ENCODE measurements at regions of chr16 and their contacts with region 1.

Region 1: DNA sequence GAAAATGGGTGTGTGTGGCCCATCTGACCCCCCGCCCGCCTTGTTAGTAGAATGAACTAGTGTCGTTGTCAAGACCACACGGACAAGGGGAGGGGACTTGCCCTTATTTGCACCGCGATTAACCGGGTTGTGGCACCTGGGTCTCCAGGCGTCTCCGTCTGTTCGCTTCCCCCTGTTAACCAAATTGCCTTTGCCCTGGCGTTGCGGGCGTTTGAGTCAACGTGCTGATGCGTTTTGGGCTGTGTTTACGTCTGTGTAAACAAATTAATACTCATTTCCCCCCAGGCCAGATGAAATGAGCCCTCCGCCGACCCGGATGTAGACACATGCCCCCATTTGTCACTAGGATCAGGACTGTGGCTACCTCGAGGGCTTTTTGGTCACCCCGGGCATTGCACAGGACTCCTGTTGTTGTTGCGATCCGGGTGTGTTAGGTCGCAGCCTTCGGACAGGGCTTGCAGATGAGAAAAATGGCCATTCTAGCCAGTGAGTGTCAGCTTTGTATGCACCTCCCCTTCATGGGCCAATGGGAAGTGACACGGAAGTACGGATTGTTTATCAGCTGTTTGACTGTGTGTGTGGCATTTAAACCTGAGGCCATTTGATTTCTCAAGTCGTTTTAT is 906 bp downstream of the RBL2 start:
- DNase-seq: peak; percentile 57 to 82
- ATAC-seq: peak; percentile 89 to 92 (median 90)
- H3K4me3 ChIP-seq: peak overlapping the region; percentile 82
- H3K27ac ChIP-seq: peak overlapping the region; percentile 92
- H3K4me1 ChIP-seq: peaks cover 20% of the 10 kb centered on the region
- H3K27me3 ChIP-seq: no peaks in the 10 kb centered on the region
- CTCF ChIP-seq: no peak

Region 2: GRCh38 chr16:53235851-53236250 is 199.3 kb before region 1 on chr16:
- intact Hi-C with region 1: no loop called
- DNase-seq: no peak
- ATAC-seq: no peak
- H3K4me3 ChIP-seq: no peak overlapping the region
- H3K27ac ChIP-seq: no peak overlapping the region
- H3K4me1 ChIP-seq: no peaks in the 10 kb centered on the region
- H3K27me3 ChIP-seq: no peaks in the 10 kb centered on the region
- CTCF ChIP-seq: no peak

Region 3: GRCh38 chr16:53495325-53495724 is 60.1 kb after region 1 on chr16:
- intact Hi-C with region 1: loop called (anchors 5 kb)
- DNase-seq: no peak
- ATAC-seq: no peak
- H3K4me3 ChIP-seq: no peak overlapping the region
- H3K27ac ChIP-seq: no peak overlapping the region
- H3K4me1 ChIP-seq: peaks cover 7% of the 10 kb centered on the region
- H3K27me3 ChIP-seq: no peaks in the 10 kb centered on the region
- CTCF ChIP-seq: no peak

Region 4: DNA sequence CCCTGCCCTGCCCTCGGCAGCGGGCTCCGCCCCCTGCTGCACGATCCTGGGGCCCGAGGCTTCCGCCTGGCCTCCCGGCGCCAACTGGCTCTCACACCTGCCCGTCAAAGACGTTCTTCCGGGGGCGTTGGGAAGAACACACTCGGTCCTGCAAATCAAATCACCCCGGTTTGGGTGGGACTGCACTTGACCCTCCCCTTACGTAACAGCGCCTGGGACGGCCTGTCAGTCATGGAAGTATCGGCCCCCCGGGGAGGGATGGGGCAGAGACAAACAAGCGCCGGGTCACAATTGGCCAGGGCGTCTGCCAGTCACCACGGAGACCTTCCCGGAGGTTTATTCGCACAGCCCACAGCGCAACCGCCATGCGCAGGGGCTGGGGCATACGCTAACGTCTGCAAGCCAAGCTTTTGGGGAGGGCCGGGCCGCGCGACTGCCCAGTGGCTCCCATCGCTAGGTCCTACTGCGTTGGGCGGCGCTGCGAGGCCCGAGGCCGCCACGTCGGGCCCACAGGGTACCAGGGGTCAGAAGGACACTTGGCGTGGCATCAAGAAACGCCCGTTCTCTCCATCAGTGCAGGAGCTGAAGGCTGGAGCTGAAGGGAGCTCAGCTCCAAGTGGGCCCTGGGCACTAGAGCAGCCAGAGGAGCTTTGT is 68.2 kb after region 1 on chr16:
- intact Hi-C with region 1: loop called (anchors 5 kb)
- DNase-seq: peak; percentile 100
- ATAC-seq: peak; percentile 90 to 94 (median 93)
- H3K4me3 ChIP-seq: peak overlapping the region; percentile 87
- H3K27ac ChIP-seq: peak overlapping the region; percentile 97
- H3K4me1 ChIP-seq: peaks cover 24% of the 10 kb centered on the region
- H3K27me3 ChIP-seq: no peaks in the 10 kb centered on the region
- CTCF ChIP-seq: no peak

Region 5: DNA sequence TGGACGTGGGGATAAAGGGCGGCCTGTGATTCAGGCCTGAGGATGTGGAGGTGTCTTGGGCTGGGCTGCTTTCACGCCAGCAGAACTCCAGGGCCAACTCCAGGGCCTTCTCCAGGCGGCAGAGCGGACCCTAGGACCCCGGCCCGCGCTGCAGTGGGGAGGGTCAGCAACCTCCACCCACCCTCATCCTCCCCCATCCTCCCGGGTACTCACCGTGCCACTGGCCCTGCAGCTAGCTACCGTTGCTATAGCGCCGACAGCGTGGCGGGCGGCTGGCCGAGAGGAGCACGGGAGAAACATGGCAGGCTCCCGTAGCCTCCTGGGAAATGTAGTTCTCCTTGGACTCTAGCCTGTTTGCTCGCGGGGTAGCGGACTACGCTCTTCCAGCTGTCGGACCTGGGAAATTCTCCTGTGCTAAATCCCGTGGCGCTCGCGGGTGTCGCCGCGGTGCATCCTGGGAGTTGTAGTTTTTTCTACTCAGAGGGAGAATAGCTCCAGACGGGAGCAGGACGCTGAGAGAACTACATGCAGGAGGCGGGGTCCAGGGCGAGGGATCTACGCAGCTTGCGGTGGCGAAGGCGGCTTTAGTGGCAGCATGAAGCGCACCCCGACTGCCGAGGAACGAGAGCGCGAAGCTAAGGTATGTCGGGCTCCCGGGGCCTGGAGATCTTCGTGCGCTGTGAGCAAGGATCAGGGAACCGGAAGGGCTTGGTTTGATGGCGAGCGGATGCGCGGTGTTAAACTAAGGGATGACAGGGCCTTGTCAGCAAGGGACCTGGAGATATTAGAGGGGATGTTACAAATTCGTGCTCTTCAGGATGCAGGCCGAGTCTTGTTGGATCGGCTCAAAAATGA is 268.6 kb after region 1 on chr16 and contains the starts of genes FTO and RPGRIP1L:
- intact Hi-C with region 1: loop called in 1 of 2 experiments (anchors 10 kb)
- DNase-seq: peak; percentile 98 to 99
- ATAC-seq: peak; percentile 98 to 99 (median 99)
- H3K4me3 ChIP-seq: peak within 1 kb of the TSS; percentile 81
- H3K27ac ChIP-seq: peak within 1 kb of the TSS; percentile 81
- H3K4me1 ChIP-seq: peaks cover 18% of the 10 kb centered on the region
- H3K27me3 ChIP-seq: no peaks in the 10 kb centered on the region
- CTCF ChIP-seq: no peak
- total RNA-seq, gene FTO: 47.4 to 67.6 (median 57.7) TPM
- total RNA-seq, gene RPGRIP1L: 0.81 to 2.6 (median 1.7) TPM